GM23248 (cell line): ENCODE measurements at regions of chr9 and their contacts with region 1.

Region 1: GRCh38 chr9:69149321-69149807 is 24.7 kb upstream of the TJP2 start:
- DNase-seq: peak; percentile 80
- H3K4me3 ChIP-seq: 0 out of 2 replicates have a peak overlapping the region, but pooled peaks have one; percentile 19
- H3K27ac ChIP-seq: no peak overlapping the region
- H3K4me1 ChIP-seq: peaks cover 14% of the 10 kb centered on the region; the same call in 1 of the 2 replicates
- H3K27me3 ChIP-seq: no peaks in the 10 kb centered on the region

Region 2: DNA sequence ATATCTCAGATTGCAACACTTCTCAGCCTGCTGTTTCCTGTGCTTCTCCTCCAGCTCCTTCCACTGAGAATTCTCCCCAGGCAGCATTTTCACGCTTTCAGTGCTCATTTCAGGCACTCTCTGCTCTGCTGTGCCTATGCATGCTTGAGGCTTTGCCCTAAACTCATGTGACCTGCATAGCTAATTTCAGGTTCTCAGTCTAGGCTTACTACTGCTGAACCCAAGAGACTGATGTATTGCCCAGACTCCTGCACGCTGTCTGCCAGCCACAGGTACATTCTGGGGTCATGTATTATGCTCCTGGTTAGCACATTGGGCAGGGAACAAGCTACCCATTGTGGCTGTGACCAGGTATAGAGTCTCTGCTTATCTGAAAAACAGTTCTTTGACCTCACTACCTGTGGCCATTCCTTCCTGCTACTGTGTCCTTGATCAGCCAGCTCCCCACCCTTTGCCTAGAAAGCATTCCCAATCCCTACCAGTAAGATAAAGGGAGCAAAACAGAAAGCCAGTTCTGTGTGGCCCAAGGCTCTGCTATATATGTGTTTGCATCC is 409.7 kb before region 1 on chr9:
- in situ Hi-C with region 1: no loop called
- DNase-seq: no peak
- H3K4me3 ChIP-seq: no peak overlapping the region
- H3K27ac ChIP-seq: no peak overlapping the region
- H3K4me1 ChIP-seq: no peaks in the 10 kb centered on the region
- H3K27me3 ChIP-seq: no peaks in the 10 kb centered on the region

Region 3: GRCh38 chr9:69085569-69086283 is 63.6 kb before region 1 on chr9:
- in situ Hi-C with region 1: loop called (anchors 10 kb)
- DNase-seq: peak; percentile 59
- H3K4me3 ChIP-seq: no peak overlapping the region
- H3K27ac ChIP-seq: no peak overlapping the region
- H3K4me1 ChIP-seq: no peaks in the 10 kb centered on the region
- H3K27me3 ChIP-seq: no peaks in the 10 kb centered on the region